ENCODE measurements at regions of chr12 and their contacts with region 1.

Region 1: DNA sequence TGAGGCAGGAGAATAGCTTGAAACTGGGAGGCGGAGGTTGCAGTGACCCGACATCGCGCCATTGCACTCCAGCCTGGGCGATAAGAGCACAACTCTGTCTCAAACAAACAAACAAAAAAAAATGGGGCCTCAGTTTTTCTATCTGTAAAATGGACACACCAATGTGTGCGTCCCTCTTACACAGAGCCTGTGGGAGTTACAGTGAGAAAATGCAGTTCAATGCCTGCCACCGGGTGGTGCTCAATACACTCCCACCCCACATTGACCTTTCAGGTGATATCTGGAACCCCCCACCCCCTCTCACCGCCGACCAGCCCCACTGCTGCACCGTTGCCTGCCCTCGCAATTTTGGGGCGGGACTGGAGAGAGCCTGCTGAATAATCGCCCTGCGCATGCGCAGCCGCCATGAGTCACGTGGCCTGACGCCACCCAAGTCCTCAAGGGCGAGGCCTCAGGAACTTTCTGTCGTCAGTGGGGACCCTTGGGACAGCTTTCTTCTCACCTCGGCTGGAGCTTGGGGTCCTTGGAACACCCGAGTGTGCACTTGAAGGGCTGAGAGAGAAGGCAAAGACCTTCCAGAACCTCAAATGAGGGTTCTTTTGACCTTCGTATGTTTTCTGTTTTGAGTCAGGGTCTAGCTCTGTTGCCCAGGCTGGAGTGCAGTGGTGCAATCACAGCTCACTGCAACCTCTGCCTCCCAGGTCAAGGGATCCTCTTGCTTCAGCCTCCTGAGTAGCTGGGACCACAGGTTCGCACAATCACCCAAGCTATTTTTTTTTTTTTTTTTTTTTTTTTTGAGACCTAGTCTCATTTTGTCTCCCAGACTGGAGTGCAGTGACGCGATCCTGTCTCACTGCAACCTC is 14.6 kb upstream of the CABP1 start:
- DNase-seq: no peak
- ATAC-seq: peak; percentile 35; the same call in 1 of the 2 replicates
- H3K4me3 ChIP-seq: no peak overlapping the region
- H3K27ac ChIP-seq: no peak overlapping the region
- H3K4me1 ChIP-seq: no peaks in the 10 kb centered on the region
- H3K27me3 ChIP-seq: no peaks in the 10 kb centered on the region
- CTCF ChIP-seq: no peak; the same call in 1 of the 2 replicates

Region 2: DNA sequence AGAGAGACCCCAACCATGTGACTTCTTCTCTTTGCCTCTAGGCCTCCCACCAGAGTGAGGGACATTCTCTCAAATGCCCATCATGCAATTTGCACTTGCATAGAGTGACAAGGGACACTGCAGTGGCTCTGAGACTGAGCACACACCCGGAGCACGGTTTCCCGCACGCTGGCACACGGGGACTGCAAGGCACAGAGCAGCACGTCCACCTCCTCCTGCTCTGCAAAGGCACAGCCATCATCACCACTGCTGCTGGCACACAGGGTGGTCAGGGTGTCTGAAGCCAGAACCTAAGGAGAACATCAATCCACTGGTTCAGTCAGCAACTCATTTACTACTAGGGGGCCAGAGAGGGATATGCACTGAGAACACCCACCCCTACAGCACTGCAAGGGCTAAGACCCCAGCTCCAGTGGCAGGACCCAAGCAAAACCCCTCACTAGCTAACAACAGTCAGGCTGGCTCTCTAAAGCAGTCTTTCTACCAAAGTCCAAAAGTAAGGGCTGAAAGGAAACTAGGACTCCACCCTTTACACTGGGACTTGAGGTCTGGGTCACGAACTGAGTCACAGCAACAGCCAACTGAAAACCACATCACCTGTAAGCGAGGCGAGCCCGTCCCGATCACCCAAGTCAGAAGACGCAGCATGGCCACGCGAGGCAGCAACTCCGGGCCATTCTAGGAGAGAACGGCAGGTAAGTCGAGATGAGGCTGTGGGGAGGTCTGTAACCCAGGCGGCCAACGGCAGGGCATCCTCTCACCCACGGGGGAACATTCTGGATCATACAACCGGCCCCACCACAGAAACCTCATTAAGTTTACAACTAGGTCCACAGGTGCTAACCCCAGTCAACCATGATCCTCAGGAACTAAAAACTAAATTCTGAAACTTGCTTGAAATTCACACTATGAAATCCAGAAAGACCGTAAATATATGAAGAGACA is 469.2 kb before region 1 on chr12:
- CTCF ChIA-PET with region 1: no interaction called
- POLR2A ChIA-PET with region 1: no interaction called
- in situ Hi-C with region 1: no loop called
- intact Hi-C with region 1: no loop called
- DNase-seq: no peak
- ATAC-seq: no peak
- H3K4me3 ChIP-seq: no peak overlapping the region
- H3K27ac ChIP-seq: no peak overlapping the region
- H3K4me1 ChIP-seq: no peaks in the 10 kb centered on the region
- H3K27me3 ChIP-seq: no peaks in the 10 kb centered on the region
- CTCF ChIP-seq: no peak

Region 3: DNA sequence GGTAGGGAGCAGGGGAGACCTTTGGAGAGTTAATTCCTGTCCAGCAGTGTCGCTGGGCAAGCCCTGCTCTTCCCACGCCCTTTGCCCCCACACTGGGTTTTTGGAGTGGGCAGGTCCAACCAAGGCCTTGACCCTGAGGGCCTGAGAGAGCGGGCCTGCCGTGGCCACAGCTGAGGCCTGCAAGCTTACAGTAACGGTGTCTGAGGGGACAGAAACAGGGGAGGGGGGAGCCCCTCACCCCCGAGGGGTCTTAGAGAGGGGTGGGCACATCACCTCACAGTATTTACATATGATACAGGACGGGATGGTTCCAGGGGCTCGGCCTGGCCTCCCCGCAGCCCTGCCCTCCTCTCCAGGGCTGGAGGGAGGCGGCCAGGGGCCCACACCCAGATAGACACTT is 283.6 kb before region 1 on chr12:
- CTCF ChIA-PET with region 1: interaction called, 3 read pairs
- POLR2A ChIA-PET with region 1: interaction called, 11 read pairs
- in situ Hi-C with region 1: no loop called
- intact Hi-C with region 1: no loop called
- DNase-seq: no peak
- ATAC-seq: no peak
- H3K4me3 ChIP-seq: no peak overlapping the region
- H3K27ac ChIP-seq: no peak overlapping the region
- H3K4me1 ChIP-seq: no peaks in the 10 kb centered on the region
- H3K27me3 ChIP-seq: no peaks in the 10 kb centered on the region
- CTCF ChIP-seq: no peak

Region 4: DNA sequence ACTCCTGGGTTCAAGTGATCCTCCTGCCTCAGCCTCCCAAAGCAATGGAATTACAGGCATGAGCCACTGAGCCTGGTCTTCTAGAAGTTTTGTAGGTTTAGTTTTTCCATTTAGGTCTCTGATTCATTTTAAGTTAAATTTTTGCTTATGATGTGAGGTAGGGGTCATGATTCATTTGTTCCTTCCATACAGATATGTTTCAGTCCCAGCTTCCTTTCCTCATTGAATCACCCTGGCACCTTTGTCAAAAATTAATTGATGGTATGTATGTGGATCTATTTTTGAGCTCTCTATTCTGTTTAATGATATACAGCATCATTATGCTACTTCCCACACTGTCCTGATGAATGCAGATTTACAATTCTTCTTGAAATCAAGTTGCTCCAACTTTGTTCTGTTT is 10.9 kb before region 1 on chr12:
- CTCF ChIA-PET with region 1: no interaction called
- POLR2A ChIA-PET with region 1: no interaction called
- in situ Hi-C with region 1: no loop called
- intact Hi-C with region 1: no loop called
- DNase-seq: no peak
- ATAC-seq: no peak
- H3K4me3 ChIP-seq: no peak overlapping the region
- H3K27ac ChIP-seq: no peak overlapping the region
- H3K4me1 ChIP-seq: no peaks in the 10 kb centered on the region
- H3K27me3 ChIP-seq: no peaks in the 10 kb centered on the region; the same call in 1 of the 2 replicates
- CTCF ChIP-seq: no peak

Region 5: GRCh38 chr12:120775862-120776552 is 150.2 kb after region 1 on chr12:
- CTCF ChIA-PET with region 1: interaction called, 19 read pairs
- POLR2A ChIA-PET with region 1: no interaction called
- in situ Hi-C with region 1: no loop called
- intact Hi-C with region 1: no loop called
- DNase-seq: no peak
- ATAC-seq: no peak
- H3K4me3 ChIP-seq: no peak overlapping the region
- H3K27ac ChIP-seq: no peak overlapping the region
- H3K4me1 ChIP-seq: no peaks in the 10 kb centered on the region
- H3K27me3 ChIP-seq: no peaks in the 10 kb centered on the region
- CTCF ChIP-seq: no peak; the same call in 1 of the 2 replicates

Measured in Panc1 (cell line).